ENCODE measurements at regions of chr6 and their contacts with region 1.

Region 1: GRCh38 chr6:106300944-106301343 is 24.6 kb downstream of the ATG5 start:
- DNase-seq: no peak
- H3K4me3 ChIP-seq: no peak overlapping the region
- CTCF ChIP-seq: peak; percentile 40

Region 2: DNA sequence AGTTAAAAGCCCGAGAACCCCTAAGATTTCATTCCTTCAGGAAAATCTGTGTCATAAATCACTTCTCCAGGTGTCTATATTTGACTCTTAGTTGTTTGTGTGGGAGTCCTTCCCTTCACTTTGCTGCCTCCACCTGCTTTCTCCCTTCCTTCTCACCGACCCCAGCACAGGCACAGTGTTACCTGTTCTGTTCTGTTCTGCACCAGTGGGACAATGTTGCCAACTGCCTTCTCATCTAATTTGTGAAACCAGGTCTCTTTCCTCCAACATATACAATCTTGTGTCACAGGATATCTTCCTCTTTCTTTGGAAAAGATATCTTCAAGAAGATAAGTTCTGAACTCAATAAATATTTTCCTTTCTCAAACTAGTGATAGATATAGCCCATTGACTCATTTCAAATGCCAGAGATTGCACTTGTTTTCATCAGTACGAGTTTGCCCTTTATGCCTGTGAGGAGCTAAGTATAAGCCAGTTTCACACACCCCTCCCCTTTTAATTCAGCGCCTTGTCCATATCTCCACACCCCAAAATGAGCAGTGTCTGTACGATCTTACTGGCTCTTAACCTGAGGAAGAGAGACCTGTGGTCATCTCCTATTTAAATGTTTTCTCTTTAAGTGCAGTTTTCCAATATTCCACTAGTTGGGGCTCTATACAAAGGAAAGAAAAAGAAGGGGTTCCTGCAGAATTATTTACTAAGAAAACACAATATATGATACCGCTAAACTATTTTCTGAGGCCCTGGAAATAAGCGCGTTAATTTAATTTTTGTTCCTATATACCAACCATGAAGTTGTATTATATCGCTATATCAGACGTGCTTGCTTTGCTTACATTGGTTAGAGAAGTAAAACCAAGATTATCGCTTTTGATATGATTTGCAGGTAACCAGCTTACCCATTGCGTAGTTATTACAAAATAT is 816.4 kb before region 1 on chr6:
- CTCF ChIA-PET with region 1: interaction called, 10 read pairs
- POLR2A ChIA-PET with region 1: no interaction called
- DNase-seq: no peak
- H3K4me3 ChIP-seq: no peak overlapping the region
- CTCF ChIP-seq: peak; percentile 49

Region 3: GRCh38 chr6:105578179-105578707 is 722.7 kb before region 1 on chr6:
- CTCF ChIA-PET with region 1: no interaction called
- POLR2A ChIA-PET with region 1: no interaction called
- DNase-seq: no peak
- H3K4me3 ChIP-seq: no peak overlapping the region
- CTCF ChIP-seq: no peak

Region 4: DNA sequence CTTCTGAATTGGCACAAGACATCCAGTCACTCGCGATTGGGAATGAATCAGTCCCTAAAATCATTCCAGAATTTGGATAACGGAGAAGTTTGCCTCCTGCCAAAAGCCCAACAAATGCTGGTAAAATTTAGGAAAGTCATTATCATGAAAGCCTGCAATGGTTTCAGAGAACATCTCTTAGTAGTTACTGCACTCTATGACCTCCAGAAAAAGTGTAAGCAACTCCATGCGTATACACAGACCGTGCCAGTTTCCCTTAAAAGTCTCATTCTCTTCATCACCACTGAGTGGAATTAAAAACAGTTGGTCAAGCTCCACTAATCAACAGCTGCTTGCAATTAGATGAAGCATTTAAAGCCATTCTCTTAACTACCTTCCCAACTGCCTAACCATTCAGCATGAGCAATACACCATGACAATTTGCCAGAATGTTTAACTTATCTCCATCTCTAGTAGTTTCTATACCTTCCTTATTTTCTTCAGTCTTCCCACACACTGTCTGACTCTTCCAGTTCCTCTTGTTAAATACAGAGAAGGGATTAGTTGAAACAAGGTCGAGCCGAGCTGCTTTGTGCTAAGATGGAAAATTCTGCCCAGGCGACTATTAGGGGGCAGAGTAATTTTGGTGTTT is 398.4 kb before region 1 on chr6:
- CTCF ChIA-PET with region 1: no interaction called
- POLR2A ChIA-PET with region 1: no interaction called
- DNase-seq: no peak
- H3K4me3 ChIP-seq: no peak overlapping the region
- CTCF ChIP-seq: no peak

Region 5: GRCh38 chr6:106097411-106098231 is 203.3 kb before region 1 on chr6:
- CTCF ChIA-PET with region 1: interaction called, 37 read pairs
- POLR2A ChIA-PET with region 1: no interaction called
- DNase-seq: no peak
- H3K4me3 ChIP-seq: peak overlapping the region; percentile 53
- CTCF ChIP-seq: no peak

Region 6: GRCh38 chr6:106187424-106187982 is 113.4 kb before region 1 on chr6:
- CTCF ChIA-PET with region 1: interaction called, 14 read pairs
- POLR2A ChIA-PET with region 1: no interaction called
- DNase-seq: no peak
- H3K4me3 ChIP-seq: no peak overlapping the region
- CTCF ChIP-seq: no peak

Region 7: DNA sequence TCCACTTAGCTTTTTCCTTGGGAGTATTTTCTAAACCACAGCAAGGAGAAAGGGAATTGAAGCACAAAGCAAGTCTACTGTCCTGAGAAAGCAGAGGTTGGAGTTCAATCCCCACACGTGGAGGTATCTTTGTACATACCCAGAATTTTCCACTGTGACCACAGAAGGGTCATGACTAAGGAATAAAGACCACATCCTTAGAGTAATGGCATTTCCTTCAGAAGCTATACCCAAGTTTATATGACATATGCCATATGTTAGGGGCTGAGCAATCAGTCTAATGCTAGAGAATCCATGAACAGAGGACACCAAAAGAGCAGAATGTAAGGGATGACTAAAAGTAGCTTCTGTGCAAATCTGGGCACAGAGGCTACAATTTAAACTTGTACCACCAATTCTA is 21.8 kb before region 1 on chr6:
- CTCF ChIA-PET with region 1: interaction called, 15 read pairs
- POLR2A ChIA-PET with region 1: no interaction called
- DNase-seq: no peak
- H3K4me3 ChIP-seq: no peak overlapping the region
- CTCF ChIP-seq: no peak

Region 8: DNA sequence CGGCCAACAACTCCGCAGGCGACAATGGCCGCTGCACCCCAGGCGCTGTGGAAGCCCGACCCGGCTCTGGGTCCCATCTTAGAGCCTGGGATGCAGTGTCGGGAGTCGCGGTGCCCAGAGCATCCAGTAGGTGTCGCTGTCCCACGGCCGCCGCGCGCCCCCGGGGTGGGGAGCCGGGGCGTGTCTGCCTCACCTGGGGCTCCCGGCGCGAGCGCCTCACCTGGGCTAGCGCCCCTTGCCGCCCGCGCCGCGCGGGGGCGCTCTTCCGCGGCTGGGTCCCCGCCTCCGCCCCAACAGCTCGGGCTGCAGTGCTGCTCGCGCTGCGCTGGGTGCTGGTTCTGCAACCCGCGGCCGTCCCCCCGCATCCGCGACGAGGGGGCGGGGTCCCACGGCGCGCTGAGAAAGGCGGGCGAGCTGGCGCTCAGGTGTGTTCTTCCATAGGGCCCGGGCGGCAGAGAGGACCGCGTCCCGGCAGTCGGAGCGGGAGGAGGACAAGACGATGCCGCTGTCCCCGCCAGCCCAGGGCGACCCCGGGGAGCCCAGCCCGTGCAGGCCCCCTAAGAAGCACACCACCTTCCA is 59.6 kb after region 1 on chr6 and contains the start of gene CRYBG1:
- CTCF ChIA-PET with region 1: no interaction called
- POLR2A ChIA-PET with region 1: no interaction called
- DNase-seq: no peak
- H3K4me3 ChIP-seq: peak within 1 kb of the TSS; percentile 41
- CTCF ChIP-seq: peak; percentile 83

Region 9: DNA sequence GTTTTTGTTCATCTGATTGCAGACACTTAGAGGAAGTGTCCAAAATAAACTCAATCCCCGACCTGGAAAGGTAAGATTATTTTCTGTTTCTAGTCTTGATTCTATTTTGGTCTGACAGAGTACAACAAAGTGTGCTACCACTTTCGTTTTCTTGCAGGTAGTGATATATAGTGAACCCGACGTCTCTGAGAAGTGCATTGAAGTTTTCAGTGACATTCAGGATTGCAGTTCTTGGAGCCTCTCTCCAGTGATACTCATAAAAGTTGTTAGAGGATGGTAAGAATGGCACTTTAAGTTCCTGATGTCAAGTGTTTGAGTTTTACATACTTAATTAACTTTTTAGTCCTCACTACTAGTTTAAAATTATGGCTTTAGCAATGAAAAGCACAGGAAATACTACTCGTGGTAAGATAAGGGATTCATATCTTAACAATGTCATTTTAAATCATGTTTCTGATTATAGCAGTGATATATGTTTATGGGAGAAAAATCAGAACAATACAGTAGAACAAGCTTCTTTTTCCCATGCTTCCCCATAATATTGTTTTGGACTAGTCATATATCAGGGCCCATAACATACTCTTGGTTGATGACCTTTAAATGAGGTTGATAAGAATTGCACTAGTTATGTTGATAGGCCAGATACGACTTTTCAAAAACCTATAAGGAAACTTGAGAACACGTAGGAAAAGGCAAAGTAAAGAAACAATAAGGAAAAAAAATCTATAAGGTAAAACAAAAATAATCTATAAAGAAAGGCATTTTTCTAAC is 224.4 kb after region 1 on chr6:
- CTCF ChIA-PET with region 1: no interaction called
- POLR2A ChIA-PET with region 1: no interaction called
- DNase-seq: no peak
- H3K4me3 ChIP-seq: no peak overlapping the region
- CTCF ChIP-seq: no peak

Measured in AG04449 (cell line).